OCI-LY7 (cell line): ENCODE measurements at regions of chr2 and their contacts with region 1.

Region 1: GRCh38 chr2:174985630-174986029 is 19.6 kb downstream of the CHN1 start:
- DNase-seq: no peak
- H3K4me3 ChIP-seq: no peak overlapping the region
- H3K27ac ChIP-seq: no peak overlapping the region
- H3K4me1 ChIP-seq: no peaks in the 10 kb centered on the region
- CTCF ChIP-seq: peak; percentile 56

Region 2: GRCh38 chr2:174748948-174749347 is 236.7 kb before region 1 on chr2:
- CTCF ChIA-PET with region 1: no interaction called
- POLR2A ChIA-PET with region 1: no interaction called
- intact Hi-C with region 1: loop called (anchors 10 kb)
- DNase-seq: peak; percentile 64
- H3K4me3 ChIP-seq: no peak overlapping the region
- H3K27ac ChIP-seq: no peak overlapping the region
- H3K4me1 ChIP-seq: peaks cover 8% of the 10 kb centered on the region
- CTCF ChIP-seq: peak; percentile 92